Activated T-helper 2 cell treated with anti-CD3 and anti-CD28 coated beads, Interferon-gamma antibody, Interleukin-2, Interleukin-4, amounts not matched to agents 10 μg/mL and 5 μg/mL and 100 μg/mL, durations not matched to agents 14 hours and 24 hours and 36 hours (primary cell): ENCODE measurements at regions of chr3 and their contacts with region 1.

Region 1: GRCh38 chr3:50568947-50569749 is at the start of gene HEMK1:
- DNase-seq: peak; percentile 93
- H3K4me3 Mint-ChIP-seq: peak within 1 kb of the TSS; percentile 95
- H3K27ac Mint-ChIP-seq: peak within 1 kb of the TSS; percentile 96
- H3K4me1 Mint-ChIP-seq: peaks cover 66% of the 10 kb centered on the region
- H3K27me3 Mint-ChIP-seq: no peaks in the 10 kb centered on the region
- total RNA-seq, gene HEMK1: 61.7 and 68.7 TPM in 2 replicates

Region 2: DNA sequence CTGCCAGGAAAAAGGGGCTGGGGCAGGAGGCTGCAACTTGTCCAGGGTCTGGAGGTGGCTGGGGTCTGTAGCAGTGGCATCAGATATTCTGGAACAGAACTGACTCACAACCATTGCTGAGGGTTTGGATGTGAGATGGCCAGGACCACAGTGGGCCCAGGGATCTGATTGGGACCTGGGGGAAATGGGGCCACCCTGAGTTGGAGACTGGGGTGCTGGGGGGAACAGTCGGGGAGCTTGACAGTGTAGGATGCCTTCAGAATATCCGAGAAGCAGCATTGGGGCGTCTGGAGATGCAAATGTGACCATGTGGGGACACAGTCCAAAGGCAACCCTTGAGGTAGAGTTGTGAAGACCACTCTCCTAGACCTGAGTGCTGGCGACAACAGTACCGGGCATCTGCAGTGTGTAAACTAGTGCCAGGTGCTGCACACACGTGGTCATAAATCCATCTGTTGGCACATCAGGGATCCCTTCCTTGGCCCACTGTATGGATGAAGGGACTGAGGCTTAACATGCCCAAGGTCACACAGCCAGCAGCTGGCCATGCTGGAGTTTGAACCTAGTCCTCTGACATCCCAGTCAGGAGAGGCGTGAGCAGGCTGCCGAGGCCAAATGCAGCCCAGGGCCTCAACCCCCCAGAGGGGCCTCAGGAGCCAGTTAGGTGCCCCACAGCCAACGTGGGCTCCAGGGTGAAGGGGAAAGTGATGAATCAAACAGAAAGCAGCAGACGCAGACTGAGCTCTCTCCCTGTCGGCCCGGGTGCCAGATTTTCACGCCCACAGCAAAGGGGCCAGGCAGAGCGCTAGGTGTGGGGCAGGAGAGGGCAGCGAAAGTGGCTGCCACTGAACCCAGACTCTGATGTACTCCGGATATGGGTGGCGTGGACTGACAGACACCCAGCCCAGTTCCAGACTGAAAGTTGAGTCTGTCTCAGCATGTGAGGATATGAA is 18.9 kb after region 1 on chr3:
- intact Hi-C with region 1: loop called (anchors 1 kb)
- DNase-seq: peak; percentile 64
- H3K4me3 Mint-ChIP-seq: peak overlapping the region; percentile 58
- H3K27ac Mint-ChIP-seq: peak overlapping the region; percentile 98
- H3K4me1 Mint-ChIP-seq: peaks cover 78% of the 10 kb centered on the region
- H3K27me3 Mint-ChIP-seq: no peaks in the 10 kb centered on the region

Region 3: GRCh38 chr3:50674349-50675178 is 105.4 kb after region 1 on chr3 and contains the start of gene DOCK3:
- intact Hi-C with region 1: loop called (anchors 5 kb)
- DNase-seq: peak; percentile 56
- H3K4me3 Mint-ChIP-seq: peak within 1 kb of the TSS; percentile 75
- H3K27ac Mint-ChIP-seq: no peak within 1 kb of the TSS
- H3K4me1 Mint-ChIP-seq: peaks cover 12% of the 10 kb centered on the region
- H3K27me3 Mint-ChIP-seq: peaks cover 49% of the 10 kb centered on the region
- total RNA-seq, gene DOCK3: 1.1 and 1.4 TPM in 2 replicates

Region 4: GRCh38 chr3:50840983-50841489 is 271.9 kb after region 1 on chr3:
- intact Hi-C with region 1: no loop called
- DNase-seq: no peak
- H3K4me3 Mint-ChIP-seq: no peak overlapping the region
- H3K27ac Mint-ChIP-seq: no peak overlapping the region
- H3K4me1 Mint-ChIP-seq: peaks cover 1% of the 10 kb centered on the region
- H3K27me3 Mint-ChIP-seq: peaks cover 3% of the 10 kb centered on the region

Region 5: GRCh38 chr3:51384726-51385473 is 815.8 kb after region 1 on chr3 and contains the start of gene MANF:
- intact Hi-C with region 1: loop called (anchors 2 kb)
- DNase-seq: peak; percentile 97
- H3K4me3 Mint-ChIP-seq: peak within 1 kb of the TSS; percentile 96
- H3K27ac Mint-ChIP-seq: peak within 1 kb of the TSS; percentile 97
- H3K4me1 Mint-ChIP-seq: peaks cover 41% of the 10 kb centered on the region
- H3K27me3 Mint-ChIP-seq: no peaks in the 10 kb centered on the region
- total RNA-seq, gene MANF: 235 and 238 TPM in 2 replicates

Region 6: GRCh38 chr3:51941798-51942602 is 1372.9 kb after region 1 on chr3 and contains the starts of genes PARP3 and RRP9:
- intact Hi-C with region 1: loop called (anchors 5 kb)
- DNase-seq: peak; percentile 100
- H3K4me3 Mint-ChIP-seq: peak within 1 kb of the TSS; percentile 76
- H3K27ac Mint-ChIP-seq: peak within 1 kb of the TSS; percentile 86
- H3K4me1 Mint-ChIP-seq: peaks cover 22% of the 10 kb centered on the region
- H3K27me3 Mint-ChIP-seq: no peaks in the 10 kb centered on the region
- total RNA-seq, gene PARP3: 15.8 and 18.9 TPM in 2 replicates
- total RNA-seq, gene RRP9: 57.5 and 58.2 TPM in 2 replicates